MCF 10A (cell line): ENCODE measurements at regions of chr2 and their contacts with region 1.

Region 1: GRCh38 chr2:205947621-205948495 is 138.1 kb downstream of the INO80D start:
- DNase-seq: peak; percentile 62
- H3K4me3 Mint-ChIP-seq: no peak overlapping the region
- H3K27ac Mint-ChIP-seq: no peak overlapping the region
- H3K4me1 Mint-ChIP-seq: peaks cover 14% of the 10 kb centered on the region
- H3K27me3 Mint-ChIP-seq: no peaks in the 10 kb centered on the region
- CTCF ChIP-seq: peak; percentile 79

Region 2: DNA sequence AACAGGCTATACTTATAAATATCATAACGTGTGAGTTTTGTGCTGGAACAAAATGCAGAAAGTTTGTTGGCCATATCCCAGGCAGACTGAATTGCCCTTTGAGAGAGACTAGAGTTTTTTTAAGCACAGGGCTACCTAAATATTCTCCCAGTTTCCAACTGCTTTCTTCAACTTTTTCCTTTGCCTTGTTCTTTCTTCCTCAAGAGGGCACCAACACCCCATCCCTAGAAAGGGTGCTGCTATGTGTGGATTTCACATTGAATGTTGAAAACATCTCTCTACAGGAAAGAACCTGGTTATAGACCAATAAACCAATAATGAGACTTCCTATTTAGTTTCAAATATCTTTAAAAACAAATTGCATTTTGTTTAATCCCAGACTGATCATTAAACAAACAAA is 1923.4 kb before region 1 on chr2:
- CTCF ChIA-PET with region 1: interaction called, 3 read pairs
- POLR2A ChIA-PET with region 1: interaction called, 3 read pairs
- intact Hi-C with region 1: loop called (anchors 2 kb)
- DNase-seq: peak; percentile 64
- H3K4me3 Mint-ChIP-seq: no peak overlapping the region
- H3K27ac Mint-ChIP-seq: no peak overlapping the region
- H3K4me1 Mint-ChIP-seq: peaks cover 6% of the 10 kb centered on the region
- H3K27me3 Mint-ChIP-seq: no peaks in the 10 kb centered on the region
- CTCF ChIP-seq: peak; percentile 67

Region 3: GRCh38 chr2:204260162-204260877 is 1687.5 kb before region 1 on chr2:
- CTCF ChIA-PET with region 1: interaction called, 11 read pairs
- POLR2A ChIA-PET with region 1: no interaction called
- intact Hi-C with region 1: no loop called
- DNase-seq: peak; percentile 71
- H3K4me3 Mint-ChIP-seq: no peak overlapping the region
- H3K27ac Mint-ChIP-seq: no peak overlapping the region
- H3K4me1 Mint-ChIP-seq: peaks cover 6% of the 10 kb centered on the region
- H3K27me3 Mint-ChIP-seq: no peaks in the 10 kb centered on the region
- CTCF ChIP-seq: peak; percentile 81

Region 4: GRCh38 chr2:205885492-205886099 is 62.3 kb before region 1 on chr2:
- CTCF ChIA-PET with region 1: no interaction called
- POLR2A ChIA-PET with region 1: interaction called, 3 read pairs
- intact Hi-C with region 1: loop called (anchors 5 kb)
- DNase-seq: peak; percentile 65
- H3K4me3 Mint-ChIP-seq: no peak overlapping the region
- H3K27ac Mint-ChIP-seq: no peak overlapping the region
- H3K4me1 Mint-ChIP-seq: no peaks in the 10 kb centered on the region
- H3K27me3 Mint-ChIP-seq: no peaks in the 10 kb centered on the region
- CTCF ChIP-seq: peak; percentile 81

Region 5: DNA sequence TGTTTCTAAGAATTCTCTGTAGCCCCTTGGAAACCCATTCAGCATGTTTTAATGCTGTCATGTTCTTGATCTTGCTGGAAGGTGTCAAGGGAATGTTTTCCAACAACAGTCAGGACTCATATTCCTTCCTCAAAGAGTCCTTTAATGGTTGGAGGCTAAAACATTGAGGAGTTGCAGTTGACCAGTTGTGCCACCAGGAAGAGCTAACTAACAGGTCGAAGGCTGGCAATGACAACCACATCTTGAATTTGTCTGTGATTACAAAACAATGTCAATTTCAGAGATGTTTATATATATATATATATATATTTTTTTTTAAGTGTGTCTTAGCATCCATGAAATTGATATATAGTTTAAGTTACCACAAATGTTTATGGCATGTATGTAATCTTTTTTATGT is 13.4 kb before region 1 on chr2:
- CTCF ChIA-PET with region 1: interaction called, 50 read pairs
- POLR2A ChIA-PET with region 1: no interaction called
- intact Hi-C with region 1: no loop called
- DNase-seq: peak; percentile 17
- H3K4me3 Mint-ChIP-seq: no peak overlapping the region
- H3K27ac Mint-ChIP-seq: no peak overlapping the region
- H3K4me1 Mint-ChIP-seq: no peaks in the 10 kb centered on the region
- H3K27me3 Mint-ChIP-seq: no peaks in the 10 kb centered on the region
- CTCF ChIP-seq: no peak

Region 6: GRCh38 chr2:206112846-206113547 is 165.1 kb after region 1 on chr2:
- CTCF ChIA-PET with region 1: no interaction called
- POLR2A ChIA-PET with region 1: no interaction called
- intact Hi-C with region 1: no loop called
- DNase-seq: peak; percentile 9
- H3K4me3 Mint-ChIP-seq: no peak overlapping the region
- H3K27ac Mint-ChIP-seq: no peak overlapping the region
- H3K4me1 Mint-ChIP-seq: no peaks in the 10 kb centered on the region
- H3K27me3 Mint-ChIP-seq: no peaks in the 10 kb centered on the region
- CTCF ChIP-seq: no peak

Region 7: GRCh38 chr2:206282746-206283145 is 334.9 kb after region 1 on chr2:
- CTCF ChIA-PET with region 1: no interaction called
- POLR2A ChIA-PET with region 1: no interaction called
- intact Hi-C with region 1: no loop called
- DNase-seq: no peak
- H3K4me3 Mint-ChIP-seq: no peak overlapping the region
- H3K27ac Mint-ChIP-seq: no peak overlapping the region
- H3K4me1 Mint-ChIP-seq: no peaks in the 10 kb centered on the region
- H3K27me3 Mint-ChIP-seq: no peaks in the 10 kb centered on the region
- CTCF ChIP-seq: no peak